RWPE1 (cell line): ENCODE measurements at regions of chr6 and their contacts with region 1.

Region 1: DNA sequence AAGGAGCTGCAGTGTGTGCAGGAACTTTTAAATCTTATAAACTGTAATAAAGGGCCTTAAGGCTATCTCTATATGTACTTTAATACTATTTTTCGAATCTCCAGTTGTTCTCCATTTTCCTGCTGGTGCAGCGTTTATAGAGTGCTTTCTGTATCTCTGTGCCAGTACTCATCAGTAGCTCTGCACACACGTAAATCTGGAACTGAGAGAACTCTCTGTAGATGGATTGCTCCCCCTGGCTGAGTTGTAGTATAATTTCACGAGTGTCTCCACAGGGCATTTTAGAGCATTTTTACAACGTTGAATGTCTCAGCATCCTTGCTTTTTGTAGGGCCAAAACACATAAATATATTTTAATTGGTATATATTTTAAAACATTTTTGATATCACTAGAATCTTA is 256.5 kb downstream of the TRDN start:
- DNase-seq: no peak
- H3K27ac ChIP-seq: no peak overlapping the region
- CTCF ChIP-seq: no peak

Region 2: GRCh38 chr6:122869437-122870024 is 510.7 kb before region 1 on chr6:
- CTCF ChIA-PET with region 1: interaction called, 17 read pairs
- POLR2A ChIA-PET with region 1: no interaction called
- DNase-seq: peak; percentile 54
- H3K27ac ChIP-seq: no peak overlapping the region
- CTCF ChIP-seq: peak; percentile 53